ENCODE measurements at regions of chr2 and their contacts with region 1.

Region 1: GRCh38 chr2:36381993-36382392 is 26.4 kb downstream of the CRIM1 start:
- DNase-seq: no peak
- H3K4me3 ChIP-seq: no peak overlapping the region
- H3K27ac ChIP-seq: peak overlapping the region; percentile 75
- H3K4me1 ChIP-seq: peaks cover 97% of the 10 kb centered on the region
- H3K27me3 ChIP-seq: no peaks in the 10 kb centered on the region
- CTCF ChIP-seq: no peak
- POLR2A ChIP-seq: no peak

Region 2: GRCh38 chr2:36397728-36398413 is 15.9 kb after region 1 on chr2:
- CTCF ChIA-PET with region 1: interaction called, 12 read pairs
- POLR2A ChIA-PET with region 1: interaction called, 3 read pairs
- dilution Hi-C with region 1: no loop called
- intact Hi-C with region 1: no loop called
- DNase-seq: no peak
- H3K4me3 ChIP-seq: no peak overlapping the region
- H3K27ac ChIP-seq: peak overlapping the region; percentile 70
- H3K4me1 ChIP-seq: peaks cover 93% of the 10 kb centered on the region
- H3K27me3 ChIP-seq: no peaks in the 10 kb centered on the region
- CTCF ChIP-seq: no peak
- POLR2A ChIP-seq: peak; percentile 55

Measured in endothelial cell of umbilical vein (primary cell).